ENCODE measurements at regions of chr2 and their contacts with region 1.

Region 1: GRCh38 chr2:172253190-172254052 is 150.7 kb upstream of the DLX2 start:
- DNase-seq: peak; percentile 99
- H3K4me3 ChIP-seq: no peak overlapping the region
- H3K27ac ChIP-seq: peak overlapping the region; percentile 94
- H3K4me1 ChIP-seq: peaks cover 57% of the 10 kb centered on the region
- H3K27me3 ChIP-seq: no peaks in the 10 kb centered on the region
- CTCF ChIP-seq: no peak

Region 2: DNA sequence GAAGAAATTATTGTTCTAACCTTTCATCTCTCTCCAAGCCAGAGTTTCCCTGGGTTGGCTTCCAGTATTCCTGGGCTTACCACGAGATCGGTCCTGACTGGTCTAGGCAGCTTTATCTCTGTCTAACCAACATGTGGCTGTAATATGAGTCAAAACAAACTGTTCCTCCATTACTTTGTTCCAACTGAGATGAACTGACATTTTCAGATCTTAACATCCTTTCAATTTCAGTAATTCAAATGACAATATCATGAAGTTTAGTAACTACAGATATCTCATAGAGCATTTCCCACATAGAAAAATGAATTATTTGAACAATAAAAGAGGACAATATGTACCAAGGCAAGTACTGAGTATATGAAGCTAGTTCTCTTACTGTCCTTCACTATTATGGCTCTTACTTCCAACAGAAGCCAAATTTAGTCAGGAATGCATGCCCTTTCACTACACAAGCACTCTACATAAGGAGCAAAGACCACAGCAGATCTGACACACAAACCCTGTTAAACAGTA is 374.9 kb before region 1 on chr2:
- CTCF ChIA-PET with region 1: no interaction called
- dilution Hi-C with region 1: no loop called
- in situ Hi-C with region 1: no loop called
- intact Hi-C with region 1: no loop called
- DNase-seq: peak; percentile 75
- H3K4me3 ChIP-seq: no peak overlapping the region
- H3K27ac ChIP-seq: no peak overlapping the region
- H3K4me1 ChIP-seq: peaks cover 14% of the 10 kb centered on the region
- H3K27me3 ChIP-seq: no peaks in the 10 kb centered on the region
- CTCF ChIP-seq: no peak

Region 3: DNA sequence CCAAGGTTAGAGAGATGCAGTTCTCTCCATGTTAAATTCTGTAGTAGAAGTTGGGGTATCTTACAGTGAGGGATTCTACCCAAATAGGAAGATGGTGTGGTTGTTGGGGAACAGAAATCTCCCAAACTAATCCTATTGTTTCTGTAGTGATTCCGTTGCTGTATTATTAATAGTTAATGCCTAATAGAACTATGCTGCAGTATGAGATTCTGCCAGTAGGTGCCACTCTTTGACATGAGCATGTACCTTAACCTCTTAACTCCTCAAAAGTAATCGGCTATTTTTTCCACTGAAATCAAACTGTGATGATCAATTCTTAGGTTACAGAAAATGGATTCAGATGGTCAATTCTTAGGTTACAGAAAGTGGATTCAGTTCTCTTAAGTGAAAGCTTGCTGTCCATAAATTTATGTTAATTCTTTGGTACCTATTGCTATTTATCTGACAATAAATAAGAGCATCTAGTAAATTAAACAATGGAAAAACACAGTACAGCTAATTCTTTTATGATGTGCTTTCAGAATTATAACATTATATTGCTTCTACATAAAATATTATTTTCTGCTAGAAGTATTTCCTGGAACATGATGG is 52.8 kb before region 1 on chr2:
- CTCF ChIA-PET with region 1: no interaction called
- dilution Hi-C with region 1: no loop called
- in situ Hi-C with region 1: no loop called
- intact Hi-C with region 1: loop called (anchors 1 kb)
- DNase-seq: peak; percentile 47
- H3K4me3 ChIP-seq: no peak overlapping the region
- H3K27ac ChIP-seq: no peak overlapping the region
- H3K4me1 ChIP-seq: peaks cover 35% of the 10 kb centered on the region
- H3K27me3 ChIP-seq: no peaks in the 10 kb centered on the region
- CTCF ChIP-seq: peak; percentile 67 to 76

Region 4: DNA sequence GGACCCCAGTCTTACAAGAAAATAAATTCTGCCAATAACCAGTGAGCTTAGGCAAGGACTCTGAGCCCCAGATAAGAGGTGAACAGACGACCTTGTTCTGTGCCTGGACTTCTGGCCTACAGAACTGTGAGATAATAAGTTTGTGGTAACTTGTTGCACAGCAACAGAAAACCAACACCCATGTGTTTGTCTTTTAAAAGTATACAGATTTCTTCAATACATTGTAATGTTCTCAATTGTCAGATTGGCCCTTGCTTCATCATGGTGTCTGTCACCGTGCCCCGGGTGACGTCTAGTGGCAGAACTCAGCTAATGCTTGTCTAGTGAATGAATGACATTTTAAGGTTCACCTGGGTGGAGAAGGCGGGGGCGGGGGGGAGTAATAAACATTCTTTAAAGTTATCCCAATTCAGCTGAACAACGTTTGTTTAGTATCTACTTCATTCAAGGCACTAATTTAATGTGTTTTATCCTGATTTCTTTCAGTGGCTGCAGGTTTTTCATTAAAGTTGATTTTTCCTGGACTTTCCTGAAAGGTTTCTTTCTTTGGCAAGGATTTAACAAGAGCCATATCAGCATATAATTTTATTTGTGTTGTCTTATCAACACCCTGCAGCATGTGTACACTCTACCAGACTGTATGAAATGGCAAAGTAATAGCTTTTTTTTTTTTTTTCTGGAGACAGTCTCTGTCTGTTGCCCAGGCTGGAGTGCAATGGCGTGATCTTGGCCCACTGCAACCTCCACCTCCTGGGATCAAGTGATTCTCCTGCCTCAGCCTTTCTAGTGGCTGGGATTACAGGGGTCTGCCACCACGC is 27.0 kb before region 1 on chr2:
- CTCF ChIA-PET with region 1: interaction called, 10 read pairs
- dilution Hi-C with region 1: no loop called
- in situ Hi-C with region 1: no loop called
- intact Hi-C with region 1: loop called (anchors 1 kb)
- DNase-seq: peak; percentile 56
- H3K4me3 ChIP-seq: no peak overlapping the region
- H3K27ac ChIP-seq: peak overlapping the region; percentile 63
- H3K4me1 ChIP-seq: peaks cover 52% of the 10 kb centered on the region
- H3K27me3 ChIP-seq: no peaks in the 10 kb centered on the region
- CTCF ChIP-seq: peak; percentile 72 to 78

Region 5: GRCh38 chr2:172285010-172285621 is 31.7 kb after region 1 on chr2:
- CTCF ChIA-PET with region 1: no interaction called
- dilution Hi-C with region 1: no loop called
- in situ Hi-C with region 1: no loop called
- intact Hi-C with region 1: loop called (anchors 2 kb)
- DNase-seq: peak; percentile 28
- H3K4me3 ChIP-seq: no peak overlapping the region
- H3K27ac ChIP-seq: peak overlapping the region; percentile 26
- H3K4me1 ChIP-seq: peaks cover 54% of the 10 kb centered on the region
- H3K27me3 ChIP-seq: no peaks in the 10 kb centered on the region
- CTCF ChIP-seq: no peak

Region 6: DNA sequence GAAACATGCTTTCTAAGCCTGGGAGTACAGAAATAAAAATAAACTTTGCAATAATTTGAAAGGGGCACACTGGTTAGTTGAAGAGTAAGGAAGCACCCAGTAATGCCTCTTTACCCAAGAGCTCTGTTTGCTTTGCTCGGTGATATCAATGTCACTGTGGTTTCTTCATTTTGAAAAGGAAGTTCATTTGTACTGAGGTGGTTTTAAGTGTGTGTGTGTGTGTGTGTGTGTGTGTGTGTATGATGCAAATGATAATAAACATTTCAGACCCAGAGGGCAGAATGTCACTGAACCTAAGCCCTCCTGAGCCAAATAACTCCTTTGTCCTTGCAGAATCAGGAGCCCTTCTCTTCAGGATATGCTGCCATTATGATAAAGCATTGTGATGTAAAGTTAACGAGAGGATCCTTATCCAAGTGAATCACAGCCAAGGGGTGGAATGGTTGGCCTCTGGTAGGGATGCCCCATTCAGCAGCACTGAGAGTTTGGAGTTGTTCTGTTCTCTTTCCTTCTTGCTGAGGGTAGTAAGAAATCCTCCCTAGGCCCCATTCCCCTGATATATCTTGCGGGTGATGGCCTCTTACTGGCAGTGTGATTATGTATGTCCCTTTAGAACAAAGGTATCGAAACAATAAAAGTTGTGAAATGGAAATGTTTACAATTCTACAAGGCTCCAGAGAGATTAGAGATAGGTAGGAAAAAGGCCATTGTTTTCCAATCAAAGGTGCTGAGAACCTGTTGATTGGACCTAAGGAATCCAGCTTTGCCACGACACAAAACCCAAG is 181.6 kb after region 1 on chr2:
- CTCF ChIA-PET with region 1: no interaction called
- dilution Hi-C with region 1: no loop called
- in situ Hi-C with region 1: no loop called
- intact Hi-C with region 1: loop called (anchors 2 kb)
- DNase-seq: no peak
- H3K4me3 ChIP-seq: no peak overlapping the region
- H3K27ac ChIP-seq: peak overlapping the region; percentile 99
- H3K4me1 ChIP-seq: peaks cover 91% of the 10 kb centered on the region
- H3K27me3 ChIP-seq: no peaks in the 10 kb centered on the region
- CTCF ChIP-seq: no peak

Measured in mammary epithelial cell (primary cell).